Sigmoid colon (tissue), 7 donors: ENCODE measurements at regions of chr20 and their contacts with region 1.

Region 1: GRCh38 chr20:59751056-59751688 is 146.8 kb downstream of the PHACTR3 start:
- DNase-seq: peak; percentile 77
- H3K4me3 ChIP-seq: no peak overlapping the region
- H3K27ac ChIP-seq: no peak overlapping the region
- H3K4me1 ChIP-seq: peaks cover 0 to 48% (median 32%) of the 10 kb centered on the region in 4 donors
- H3K27me3 ChIP-seq: peaks cover 0 to 17% (median 13%) of the 10 kb centered on the region in 3 donors
- CTCF ChIP-seq: peak; percentile 33 to 69 (median 52)
- EP300 ChIP-seq: no peak
- POLR2A ChIP-seq: no peak

Region 2: GRCh38 chr20:59571551-59572314 is 179.4 kb before region 1 on chr20:
- intact Hi-C with region 1: loop called (anchors 2 kb)
- DNase-seq: peak; percentile 80
- H3K4me3 ChIP-seq: peak overlapping the region; percentile 13 to 42 (median 36)
- H3K27ac ChIP-seq: peak overlapping the region in 3 of 4 donors; percentile 41 to 51 (median 45)
- H3K4me1 ChIP-seq: peaks cover 0 to 7% (median 5%) of the 10 kb centered on the region in 4 donors
- H3K27me3 ChIP-seq: peaks cover 12 to 42% (median 15%) of the 10 kb centered on the region in 3 donors
- CTCF ChIP-seq: peak; percentile 47 to 97 (median 72)
- EP300 ChIP-seq: no peak
- POLR2A ChIP-seq: no peak

Region 3: DNA sequence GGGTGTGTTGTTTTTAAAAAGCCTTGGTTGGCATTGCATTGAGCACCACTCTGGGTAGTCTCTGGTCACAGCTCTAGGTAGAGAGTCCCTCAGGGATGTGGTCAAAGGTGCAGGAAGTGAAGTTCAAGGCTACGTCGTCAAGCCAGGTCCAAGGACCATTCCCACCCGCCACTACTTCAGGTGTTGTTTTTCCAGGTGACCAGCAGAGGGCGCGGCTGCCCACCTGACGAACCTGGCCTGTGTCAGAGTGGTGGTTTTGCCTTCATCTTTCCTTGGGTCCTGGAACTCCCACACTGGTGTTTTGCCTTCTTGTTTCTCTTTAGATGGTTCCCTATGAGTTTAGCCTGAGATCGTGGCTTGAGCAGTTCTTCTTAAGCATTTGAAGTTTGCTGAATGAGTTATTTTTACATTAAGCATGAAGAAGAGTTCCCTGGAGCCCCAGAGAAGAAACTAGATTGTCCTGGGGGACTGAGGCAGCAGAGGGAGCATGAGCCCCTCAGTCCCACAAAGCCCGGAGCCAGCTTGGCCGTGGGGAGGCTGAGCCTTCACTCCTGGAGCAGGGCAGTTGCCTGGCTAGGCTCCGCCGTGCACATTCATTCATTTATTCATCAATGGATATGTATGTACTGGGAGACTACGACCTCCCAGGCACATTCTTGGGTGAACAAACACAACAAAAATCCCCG is 152.4 kb before region 1 on chr20:
- intact Hi-C with region 1: loop called (anchors 2 kb)
- DNase-seq: no peak
- H3K4me3 ChIP-seq: no peak overlapping the region
- H3K27ac ChIP-seq: no peak overlapping the region
- H3K4me1 ChIP-seq: no peaks in the 10 kb centered on the region
- H3K27me3 ChIP-seq: peaks cover 3 to 48% (median 12%) of the 10 kb centered on the region in 3 donors
- CTCF ChIP-seq: peak; percentile 18 to 66 (median 46)
- EP300 ChIP-seq: no peak
- POLR2A ChIP-seq: no peak